Activated CD4-positive, alpha-beta T cell treated with anti-CD3 and anti-CD28 coated beads for 36 hours (primary cell): ENCODE measurements at regions of chr1 and their contacts with region 1.

Region 1: GRCh38 chr1:61641578-61642336 is 83.2 kb downstream of the TM2D1 start:
- DNase-seq: peak; percentile 83
- ATAC-seq: peak; percentile 97
- H3K4me3 Mint-ChIP-seq: peak overlapping the region; percentile 54
- H3K27ac Mint-ChIP-seq: peak overlapping the region; percentile 61
- H3K4me1 Mint-ChIP-seq: peaks cover 11% of the 10 kb centered on the region
- H3K27me3 Mint-ChIP-seq: no peaks in the 10 kb centered on the region

Region 2: GRCh38 chr1:61539720-61540462 is 101.9 kb before region 1 on chr1:
- CTCF ChIA-PET with region 1: no interaction called
- POLR2A ChIA-PET with region 1: no interaction called
- intact Hi-C with region 1: loop called in 1 of 2 experiments (anchors 5 kb)
- DNase-seq: no peak
- ATAC-seq: no peak
- H3K4me3 Mint-ChIP-seq: no peak overlapping the region
- H3K27ac Mint-ChIP-seq: no peak overlapping the region
- H3K4me1 Mint-ChIP-seq: peaks cover 8% of the 10 kb centered on the region
- H3K27me3 Mint-ChIP-seq: peaks cover 4% of the 10 kb centered on the region